Activated CD4-positive, alpha-beta memory T cell treated with anti-CD3 and anti-CD28 coated beads for 36 hours (primary cell): ENCODE measurements at regions of chr2 and their contacts with region 1.

Region 1: DNA sequence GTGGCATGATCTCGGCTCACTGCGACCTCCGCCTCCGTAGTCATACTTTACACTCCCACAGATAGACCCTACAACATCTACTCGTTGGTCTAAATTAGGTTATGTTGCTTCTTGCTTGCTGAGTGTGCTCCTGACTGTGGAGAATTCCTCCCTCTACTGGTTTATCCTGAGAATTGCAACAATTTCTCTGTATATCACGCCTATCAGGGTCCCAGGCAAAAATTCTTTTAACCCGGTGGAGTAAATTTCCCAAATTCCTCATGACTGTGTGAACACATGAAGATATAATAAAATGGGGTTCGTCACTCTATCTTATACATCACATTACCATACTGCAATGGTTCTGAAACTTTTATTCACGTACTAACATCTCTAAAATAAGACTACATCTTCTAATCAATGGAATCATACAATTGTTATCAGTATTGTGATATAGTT is 156.7 kb downstream of the EVA1A start:
- DNase-seq: no peak
- H3K4me3 Mint-ChIP-seq: no peak overlapping the region
- H3K27ac Mint-ChIP-seq: no peak overlapping the region
- H3K4me1 Mint-ChIP-seq: no peaks in the 10 kb centered on the region
- H3K27me3 Mint-ChIP-seq: peaks cover 12% of the 10 kb centered on the region

Region 2: DNA sequence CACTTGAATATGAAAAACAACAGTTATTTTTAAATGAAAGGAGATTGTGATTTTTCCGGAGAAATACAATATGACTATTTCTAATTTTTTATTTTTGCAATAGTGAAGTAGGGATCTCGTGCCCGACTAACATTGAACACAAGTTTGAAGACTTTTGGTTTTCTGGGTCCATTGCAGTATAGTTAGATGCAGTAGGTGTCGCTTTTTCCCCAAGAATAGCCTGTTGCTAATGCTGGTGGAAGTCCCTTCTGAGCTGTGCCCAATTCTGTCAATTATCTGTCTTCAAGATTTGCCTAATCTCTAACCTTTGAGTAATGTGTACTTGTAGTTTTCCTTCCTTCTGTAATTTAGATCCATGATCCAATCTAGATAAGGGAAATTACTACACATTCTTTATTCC is 713.4 kb before region 1 on chr2:
- CTCF ChIA-PET with region 1: no interaction called
- POLR2A ChIA-PET with region 1: no interaction called
- intact Hi-C with region 1: loop called (anchors 10 kb)
- DNase-seq: no peak
- H3K4me3 Mint-ChIP-seq: no peak overlapping the region
- H3K27ac Mint-ChIP-seq: no peak overlapping the region
- H3K4me1 Mint-ChIP-seq: no peaks in the 10 kb centered on the region
- H3K27me3 Mint-ChIP-seq: peaks cover 2% of the 10 kb centered on the region

Region 3: GRCh38 chr2:74735544-74735943 is 668.5 kb before region 1 on chr2:
- CTCF ChIA-PET with region 1: no interaction called
- POLR2A ChIA-PET with region 1: no interaction called
- intact Hi-C with region 1: no loop called
- DNase-seq: no peak
- H3K4me3 Mint-ChIP-seq: no peak overlapping the region
- H3K27ac Mint-ChIP-seq: no peak overlapping the region
- H3K4me1 Mint-ChIP-seq: peaks cover 4% of the 10 kb centered on the region
- H3K27me3 Mint-ChIP-seq: peaks cover 8% of the 10 kb centered on the region

Region 4: DNA sequence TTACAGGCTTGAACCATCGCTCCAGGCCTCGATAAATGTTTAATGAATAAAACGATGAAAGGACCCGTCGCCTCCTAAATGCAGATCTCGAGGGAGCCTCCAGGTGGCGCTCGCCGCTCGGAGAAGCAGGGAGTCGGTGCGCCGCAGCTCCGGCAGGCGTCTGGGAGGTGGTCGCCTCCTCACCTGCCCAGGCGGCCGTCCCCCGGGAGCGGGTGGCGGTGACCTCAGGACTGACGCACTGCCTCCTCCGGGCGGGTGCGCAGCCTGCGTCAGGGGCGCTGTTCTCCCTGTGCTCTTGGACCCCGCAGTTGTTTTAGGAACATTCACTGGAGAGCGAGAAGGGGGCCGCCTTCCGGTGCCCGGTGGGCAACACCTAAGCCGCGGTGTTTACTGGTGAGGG is 484.2 kb before region 1 on chr2:
- CTCF ChIA-PET with region 1: interaction called, 12 read pairs
- POLR2A ChIA-PET with region 1: no interaction called
- intact Hi-C with region 1: loop called (anchors 1 kb)
- DNase-seq: peak; percentile 76
- H3K4me3 Mint-ChIP-seq: no peak overlapping the region
- H3K27ac Mint-ChIP-seq: no peak overlapping the region
- H3K4me1 Mint-ChIP-seq: no peaks in the 10 kb centered on the region
- H3K27me3 Mint-ChIP-seq: peaks cover 14% of the 10 kb centered on the region

Region 5: GRCh38 chr2:75064691-75065396 is 339.2 kb before region 1 on chr2:
- CTCF ChIA-PET with region 1: interaction called, 9 read pairs
- POLR2A ChIA-PET with region 1: no interaction called
- intact Hi-C with region 1: loop called (anchors 1 kb)
- DNase-seq: peak; percentile 66
- H3K4me3 Mint-ChIP-seq: no peak overlapping the region
- H3K27ac Mint-ChIP-seq: no peak overlapping the region
- H3K4me1 Mint-ChIP-seq: no peaks in the 10 kb centered on the region
- H3K27me3 Mint-ChIP-seq: no peaks in the 10 kb centered on the region

Region 6: GRCh38 chr2:75390169-75390568 is 13.8 kb before region 1 on chr2:
- CTCF ChIA-PET with region 1: no interaction called
- POLR2A ChIA-PET with region 1: no interaction called
- intact Hi-C with region 1: loop called (anchors 1 kb)
- DNase-seq: no peak
- H3K4me3 Mint-ChIP-seq: no peak overlapping the region
- H3K27ac Mint-ChIP-seq: no peak overlapping the region
- H3K4me1 Mint-ChIP-seq: no peaks in the 10 kb centered on the region
- H3K27me3 Mint-ChIP-seq: peaks cover 7% of the 10 kb centered on the region

Region 7: GRCh38 chr2:75538521-75539490 is 134.8 kb after region 1 on chr2:
- CTCF ChIA-PET with region 1: no interaction called
- POLR2A ChIA-PET with region 1: no interaction called
- intact Hi-C with region 1: no loop called
- DNase-seq: no peak
- H3K4me3 Mint-ChIP-seq: no peak overlapping the region
- H3K27ac Mint-ChIP-seq: no peak overlapping the region
- H3K4me1 Mint-ChIP-seq: no peaks in the 10 kb centered on the region
- H3K27me3 Mint-ChIP-seq: peaks cover 9% of the 10 kb centered on the region